ENCODE measurements at regions of chr5 and their contacts with region 1.

Region 1: GRCh38 chr5:52799983-52800393 is 12.3 kb downstream of the ITGA1 start:
- H3K4me3 ChIP-seq: peak overlapping the region; percentile 62
- H3K27ac ChIP-seq: peak overlapping the region; percentile 91
- H3K4me1 ChIP-seq: peaks cover 7% of the 10 kb centered on the region
- CTCF ChIP-seq: no peak

Region 2: GRCh38 chr5:52560366-52560765 is 239.6 kb before region 1 on chr5:
- CTCF ChIA-PET with region 1: no interaction called
- POLR2A ChIA-PET with region 1: no interaction called
- H3K4me3 ChIP-seq: no peak overlapping the region
- H3K27ac ChIP-seq: no peak overlapping the region
- H3K4me1 ChIP-seq: no peaks in the 10 kb centered on the region
- CTCF ChIP-seq: no peak

Region 3: GRCh38 chr5:52665559-52665958 is 134.4 kb before region 1 on chr5:
- CTCF ChIA-PET with region 1: interaction called, 15 read pairs
- POLR2A ChIA-PET with region 1: no interaction called
- H3K4me3 ChIP-seq: no peak overlapping the region
- H3K27ac ChIP-seq: no peak overlapping the region
- H3K4me1 ChIP-seq: no peaks in the 10 kb centered on the region
- CTCF ChIP-seq: no peak

Region 4: GRCh38 chr5:52787600-52788504 is 12.1 kb before region 1 on chr5 and contains the starts of genes ITGA1 and PELO:
- CTCF ChIA-PET with region 1: interaction called, 20 read pairs
- POLR2A ChIA-PET with region 1: interaction called, 57 read pairs
- H3K4me3 ChIP-seq: peak within 1 kb of the TSS; percentile 77
- H3K27ac ChIP-seq: peak within 1 kb of the TSS; percentile 80
- H3K4me1 ChIP-seq: no peaks in the 10 kb centered on the region
- CTCF ChIP-seq: peak; percentile 96

Measured in HEK293 (cell line).